Common myeloid progenitor, CD34-positive (primary cell): ENCODE measurements at regions of chr12 and their contacts with region 1.

Region 1: GRCh38 chr12:6873094-6874014 is at the start of gene SPSB2:
- DNase-seq: peak; percentile 98 to 99 (median 99)
- H3K4me3 ChIP-seq: peak within 1 kb of the TSS; percentile 77 to 94 (median 82)
- H3K27ac ChIP-seq: peak within 1 kb of the TSS; percentile 55 to 86
- H3K4me1 ChIP-seq: peaks cover 16 to 63% (median 55%) of the 10 kb centered on the region in 4 experiments
- H3K27me3 ChIP-seq: no peaks in the 10 kb centered on the region

Region 2: GRCh38 chr12:6883683-6884082 is 10.3 kb after region 1 on chr12:
- CTCF ChIA-PET with region 1: interaction called, 26 read pairs
- POLR2A ChIA-PET with region 1: no interaction called
- DNase-seq: no peak
- H3K4me3 ChIP-seq: no peak overlapping the region
- H3K27ac ChIP-seq: no peak overlapping the region
- H3K4me1 ChIP-seq: peaks cover 0 to 6% (median 4%) of the 10 kb centered on the region in 4 experiments
- H3K27me3 ChIP-seq: no peaks in the 10 kb centered on the region

Region 3: DNA sequence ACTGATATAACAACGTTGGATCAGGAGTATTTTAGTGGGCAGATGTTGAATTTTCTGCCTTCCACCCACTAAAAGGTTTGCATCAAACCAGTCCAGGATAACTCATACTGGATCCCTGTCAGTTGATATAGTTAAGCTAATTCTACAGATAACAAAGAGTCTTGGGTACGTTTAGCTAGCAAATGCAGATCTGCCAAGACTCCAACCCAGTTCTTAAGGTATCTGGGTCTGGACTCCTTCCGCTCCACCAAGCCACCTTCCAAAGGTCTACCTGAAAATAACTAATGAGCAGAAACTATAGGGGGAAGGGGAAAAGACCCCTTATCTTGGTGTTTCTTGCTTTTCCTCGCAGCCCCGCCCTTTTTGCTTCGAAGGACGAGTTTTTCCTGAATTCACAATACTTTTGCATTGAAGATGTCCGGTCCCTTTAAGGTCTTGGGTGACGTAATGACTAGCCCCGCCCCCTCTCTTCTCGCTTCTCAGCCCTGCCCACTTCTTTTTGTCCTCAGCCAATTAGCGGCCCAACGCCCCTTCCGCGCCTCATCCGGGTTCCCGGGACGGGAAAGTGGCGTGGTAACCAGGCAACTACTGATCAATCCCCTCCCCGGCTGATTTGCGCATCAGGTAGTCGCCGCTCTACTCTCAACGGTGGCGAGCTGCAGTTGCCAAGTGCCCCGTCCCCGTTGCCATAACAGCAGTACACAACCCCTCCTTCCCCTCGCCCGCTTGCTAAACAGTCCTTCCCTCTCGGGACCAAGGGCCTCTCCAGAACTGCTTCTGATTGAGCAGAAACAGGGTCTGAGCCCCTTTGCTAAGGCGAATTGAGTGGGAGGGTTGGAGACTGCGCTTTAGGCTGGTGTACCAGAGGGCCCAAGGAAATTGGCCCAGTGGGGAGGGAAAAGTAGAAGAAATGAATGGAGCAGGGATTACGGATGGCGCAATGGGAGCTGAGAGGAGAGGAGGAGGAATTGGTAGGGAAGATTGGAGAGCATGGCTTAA is 31.2 kb after region 1 on chr12 and contains the start of gene LRRC23:
- CTCF ChIA-PET with region 1: interaction called, 105 read pairs
- POLR2A ChIA-PET with region 1: no interaction called
- DNase-seq: peak; percentile 96 to 98 (median 97)
- H3K4me3 ChIP-seq: peak within 1 kb of the TSS; percentile 54 to 87 (median 73)
- H3K27ac ChIP-seq: peak within 1 kb of the TSS; percentile 93 to 97
- H3K4me1 ChIP-seq: peaks cover 17 to 39% (median 35%) of the 10 kb centered on the region in 4 experiments
- H3K27me3 ChIP-seq: no peaks in the 10 kb centered on the region

Region 4: DNA sequence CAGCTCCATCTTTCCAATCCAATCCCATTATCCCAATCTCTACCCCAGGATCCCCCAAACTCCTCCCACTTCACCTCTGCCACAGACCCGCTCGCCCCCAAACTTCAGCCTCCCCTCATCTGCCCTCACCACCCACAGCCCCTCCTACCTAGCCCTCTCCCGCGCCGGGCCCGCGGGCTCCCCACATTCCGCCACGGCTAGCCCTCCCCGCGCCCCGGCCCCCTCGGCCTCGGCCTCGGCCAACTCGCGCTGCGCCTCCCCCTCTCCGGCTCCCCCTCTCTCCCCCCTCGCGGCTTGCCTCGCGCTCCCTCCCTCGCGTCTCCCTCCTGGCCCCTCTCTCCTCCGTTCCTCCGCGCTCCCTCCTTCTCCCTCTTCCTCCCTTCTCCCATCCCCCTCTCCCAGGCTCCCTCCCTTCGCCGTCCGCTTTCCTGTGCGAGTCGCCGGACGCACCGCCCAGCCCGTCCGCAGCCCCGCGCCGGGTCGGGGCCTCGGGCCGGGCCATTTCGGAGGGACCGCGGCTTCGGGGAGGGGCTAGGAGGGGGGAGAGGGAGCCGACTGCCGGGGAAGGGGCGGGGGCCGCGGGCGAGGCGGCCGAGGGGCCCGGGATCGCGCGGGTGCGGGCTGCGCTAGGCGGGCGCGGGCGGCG is 54.1 kb after region 1 on chr12 and contains the start of gene ATN1:
- CTCF ChIA-PET with region 1: interaction called, 37 read pairs
- POLR2A ChIA-PET with region 1: no interaction called
- DNase-seq: peak in 2 of 3 donors; percentile 58 to 69
- H3K4me3 ChIP-seq: peak within 1 kb of the TSS; percentile 67 to 86 (median 78)
- H3K27ac ChIP-seq: peak within 1 kb of the TSS; percentile 46 to 77
- H3K4me1 ChIP-seq: peaks cover 8 to 61% (median 49%) of the 10 kb centered on the region in 4 experiments
- H3K27me3 ChIP-seq: no peaks in the 10 kb centered on the region

Region 5: GRCh38 chr12:6944381-6945186 is 71.2 kb after region 1 on chr12:
- CTCF ChIA-PET with region 1: interaction called, 34 read pairs
- POLR2A ChIA-PET with region 1: interaction called, 21 read pairs
- DNase-seq: peak; percentile 90 to 94 (median 93)
- H3K4me3 ChIP-seq: peak overlapping the region; percentile 41 to 89 (median 71)
- H3K27ac ChIP-seq: peak overlapping the region; percentile 97 to 99
- H3K4me1 ChIP-seq: peaks cover 3 to 53% (median 48%) of the 10 kb centered on the region in 4 experiments
- H3K27me3 ChIP-seq: no peaks in the 10 kb centered on the region